AG04449 (cell line): ENCODE measurements at regions of chr19 and their contacts with region 1.

Region 1: DNA sequence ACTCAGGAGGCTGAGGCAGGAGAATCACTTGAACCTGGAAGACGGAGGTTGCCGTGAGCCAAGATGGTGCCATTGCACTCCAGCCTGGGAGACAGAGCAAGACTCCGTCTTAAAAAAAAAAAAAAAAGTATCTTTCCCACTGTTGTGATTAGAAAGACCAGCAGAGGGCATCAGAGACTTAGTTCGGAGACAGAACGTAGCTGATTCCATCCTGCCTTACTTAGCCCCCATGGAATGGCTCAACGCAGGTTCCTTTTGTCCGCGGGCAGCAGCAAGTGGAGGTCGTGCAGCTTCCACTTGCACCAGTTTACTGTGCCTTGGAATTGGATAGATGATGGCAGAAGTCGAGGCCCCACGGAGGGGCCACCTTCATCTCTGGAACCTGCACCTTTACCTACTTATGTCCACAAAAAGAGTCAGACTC is 8.1 kb downstream of the TIMM29 start:
- DNase-seq: peak; percentile 19
- H3K4me3 ChIP-seq: no peak overlapping the region
- CTCF ChIP-seq: peak; percentile 62

Region 2: DNA sequence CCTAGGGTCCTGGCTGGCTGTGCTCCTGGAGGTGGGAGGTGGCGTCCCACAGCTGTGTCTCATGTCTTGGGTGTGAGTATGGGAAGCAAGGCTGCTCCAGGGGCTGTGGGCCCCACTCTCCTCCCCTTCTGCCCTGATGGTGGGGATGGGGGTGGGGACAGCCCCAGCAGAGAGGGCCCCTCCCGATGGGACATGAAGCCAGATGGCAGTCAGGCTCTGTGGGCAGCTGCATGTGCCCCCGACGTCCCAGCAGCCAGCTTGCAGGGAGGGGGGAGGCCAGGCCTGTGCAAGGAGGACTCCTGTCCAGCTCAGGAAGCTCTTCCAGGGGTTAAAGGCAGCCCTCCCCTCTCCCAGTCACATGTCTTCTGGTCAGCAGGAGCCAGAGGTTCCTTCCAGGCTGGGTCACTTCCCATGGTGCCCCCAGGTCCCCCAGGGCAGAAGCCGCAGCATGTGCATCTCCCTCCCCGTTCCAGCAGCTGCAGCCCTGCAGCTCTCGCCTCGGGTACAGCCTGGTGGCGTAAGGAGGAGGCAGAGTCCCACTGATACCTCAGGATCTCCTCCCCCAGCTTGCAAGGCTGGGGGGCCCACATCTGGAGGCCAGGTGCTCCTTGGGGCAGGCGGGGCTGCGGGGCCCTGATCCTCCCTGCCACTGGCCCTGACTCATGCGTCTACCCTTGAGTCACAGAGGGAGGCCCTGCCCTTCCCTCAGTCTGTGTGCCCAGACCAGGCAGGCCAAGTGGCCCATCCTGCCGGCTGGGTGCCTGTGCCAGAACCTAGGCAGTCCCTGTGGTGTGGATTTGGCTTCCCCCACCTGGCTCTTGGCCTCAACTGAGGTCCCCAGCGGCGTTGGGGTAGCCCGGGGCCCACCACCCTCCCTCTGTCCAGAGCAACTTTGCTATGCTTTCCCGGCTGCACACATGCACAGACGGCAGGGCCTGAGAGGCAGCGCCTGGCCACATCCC is 21.3 kb before region 1 on chr19:
- CTCF ChIA-PET with region 1: interaction called, 13 read pairs
- POLR2A ChIA-PET with region 1: no interaction called
- DNase-seq: peak; percentile 23
- H3K4me3 ChIP-seq: no peak overlapping the region
- CTCF ChIP-seq: peak; percentile 44

Region 3: GRCh38 chr19:10952809-10953208 is 16.1 kb after region 1 on chr19:
- CTCF ChIA-PET with region 1: interaction called, 36 read pairs
- POLR2A ChIA-PET with region 1: interaction called, 3 read pairs
- DNase-seq: no peak
- H3K4me3 ChIP-seq: no peak overlapping the region
- CTCF ChIP-seq: no peak

Region 4: GRCh38 chr19:10975374-10976130 is 38.9 kb after region 1 on chr19:
- CTCF ChIA-PET with region 1: interaction called, 21 read pairs
- POLR2A ChIA-PET with region 1: no interaction called
- DNase-seq: no peak
- H3K4me3 ChIP-seq: no peak overlapping the region
- CTCF ChIP-seq: no peak

Region 5: DNA sequence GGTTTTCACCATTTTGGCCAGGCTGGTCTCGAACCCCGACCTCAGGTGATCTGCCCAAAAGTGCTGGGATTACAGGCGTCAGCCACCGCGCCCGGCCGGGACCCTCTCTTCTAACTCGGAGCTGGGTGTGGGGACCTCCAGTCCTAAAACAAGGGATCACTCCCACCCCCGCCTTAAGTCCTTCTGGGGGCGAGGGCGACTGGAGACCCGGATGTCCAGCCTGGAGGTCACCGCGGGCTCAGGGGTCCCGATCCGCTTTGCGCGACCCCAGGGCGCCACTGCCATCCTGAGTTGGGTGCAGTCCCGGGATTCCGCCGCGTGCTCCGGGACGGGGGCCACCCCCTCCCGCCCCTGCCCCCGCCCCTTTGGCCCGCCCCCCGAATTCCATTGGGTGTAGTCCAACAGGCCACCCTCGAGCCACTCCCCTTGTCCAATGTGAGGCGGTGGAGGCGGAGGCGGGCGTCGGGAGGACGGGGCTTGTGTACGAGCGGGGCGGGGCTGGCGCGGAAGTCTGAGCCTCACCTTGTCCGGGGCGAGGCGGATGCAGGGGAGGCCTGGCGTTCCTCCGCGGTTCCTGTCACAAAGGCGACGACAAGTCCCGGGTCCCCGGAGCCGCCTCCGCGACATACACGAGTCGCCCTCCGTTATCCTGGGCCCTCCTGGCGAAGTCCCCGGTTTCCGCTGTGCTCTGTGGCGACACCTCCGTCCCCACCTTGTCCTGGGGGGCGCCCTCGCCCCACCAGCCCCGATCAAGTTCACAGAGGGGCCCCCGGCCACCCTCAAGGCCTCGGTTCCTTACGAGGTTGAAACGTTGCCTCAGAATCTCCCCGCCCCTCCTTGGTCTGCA is 153.6 kb after region 1 on chr19:
- CTCF ChIA-PET with region 1: interaction called, 17 read pairs
- POLR2A ChIA-PET with region 1: no interaction called
- DNase-seq: peak; percentile 57
- H3K4me3 ChIP-seq: peak overlapping the region; percentile 91
- CTCF ChIP-seq: no peak